ENCODE measurements at regions of chr17 and their contacts with region 1.

Region 1: DNA sequence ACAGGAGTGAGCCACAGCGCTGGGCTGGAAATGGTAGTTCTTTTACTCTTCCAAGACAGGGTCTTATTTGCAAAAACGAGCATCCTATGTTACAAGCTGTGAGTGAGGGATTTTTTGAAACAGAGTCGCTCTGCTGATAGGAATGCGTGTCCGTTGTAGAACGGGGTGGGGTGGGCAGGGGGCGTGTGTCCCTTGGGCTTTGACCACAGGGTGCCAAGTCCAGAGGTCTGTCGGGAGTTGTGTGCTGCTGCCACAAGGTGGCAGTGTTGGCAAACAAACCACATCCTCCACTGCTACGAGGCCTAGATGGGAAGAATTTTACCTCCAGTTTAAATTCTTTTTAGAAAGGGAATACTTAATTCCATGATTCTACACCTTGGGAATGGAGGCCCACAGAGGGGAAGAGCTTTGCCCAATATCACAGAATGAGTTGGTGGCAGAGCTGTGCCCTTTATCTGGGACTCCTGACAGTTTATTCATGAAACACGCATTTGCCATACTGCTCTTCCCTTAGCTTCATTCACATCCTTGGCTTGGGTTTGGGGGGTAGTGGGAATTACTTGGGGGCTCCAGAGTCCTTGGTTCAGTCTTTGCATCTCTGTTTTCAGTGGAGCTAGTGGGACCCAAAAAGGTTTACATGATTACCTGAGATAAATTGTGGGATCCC is 30.6 kb upstream of the ETV4 start:
- DNase-seq: peak; percentile 53 to 91
- H3K4me3 ChIP-seq: no peak overlapping the region
- CTCF ChIP-seq: peak in 1 of 3 donors; percentile 69
- POLR2A ChIP-seq: no peak

Region 2: DNA sequence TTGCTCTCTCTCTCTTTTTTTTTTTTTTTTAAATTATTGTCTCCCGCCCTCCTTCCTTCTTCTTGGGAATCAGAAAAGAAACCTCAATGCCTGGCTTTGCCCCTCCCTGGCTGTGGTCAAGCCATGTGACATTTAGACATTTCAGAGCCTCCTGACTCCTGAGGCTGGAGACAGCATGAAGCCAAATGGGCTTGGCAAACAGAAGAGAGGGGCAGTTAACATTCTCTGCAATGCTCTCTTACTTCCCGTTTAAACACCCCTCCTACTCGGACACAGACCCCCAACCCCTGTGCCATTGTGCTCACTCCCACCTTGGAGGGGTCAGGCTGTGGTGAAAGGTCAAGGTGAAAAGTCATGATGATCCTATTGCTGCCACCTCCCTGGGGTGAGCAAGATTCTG is 99.8 kb after region 1 on chr17:
- intact Hi-C with region 1: loop called (anchors 2 kb)
- DNase-seq: no peak
- H3K4me3 ChIP-seq: no peak overlapping the region
- CTCF ChIP-seq: no peak
- POLR2A ChIP-seq: no peak

Region 3: GRCh38 chr17:43755389-43755875 is 178.7 kb after region 1 on chr17:
- intact Hi-C with region 1: loop called (anchors 10 kb)
- DNase-seq: peak in 1 of 2 donors; percentile 74
- H3K4me3 ChIP-seq: no peak overlapping the region
- CTCF ChIP-seq: no peak
- POLR2A ChIP-seq: no peak

Measured in lower leg skin (tissue), 4 donors.